ENCODE measurements at regions of chr1 and their contacts with region 1.

Region 1: DNA sequence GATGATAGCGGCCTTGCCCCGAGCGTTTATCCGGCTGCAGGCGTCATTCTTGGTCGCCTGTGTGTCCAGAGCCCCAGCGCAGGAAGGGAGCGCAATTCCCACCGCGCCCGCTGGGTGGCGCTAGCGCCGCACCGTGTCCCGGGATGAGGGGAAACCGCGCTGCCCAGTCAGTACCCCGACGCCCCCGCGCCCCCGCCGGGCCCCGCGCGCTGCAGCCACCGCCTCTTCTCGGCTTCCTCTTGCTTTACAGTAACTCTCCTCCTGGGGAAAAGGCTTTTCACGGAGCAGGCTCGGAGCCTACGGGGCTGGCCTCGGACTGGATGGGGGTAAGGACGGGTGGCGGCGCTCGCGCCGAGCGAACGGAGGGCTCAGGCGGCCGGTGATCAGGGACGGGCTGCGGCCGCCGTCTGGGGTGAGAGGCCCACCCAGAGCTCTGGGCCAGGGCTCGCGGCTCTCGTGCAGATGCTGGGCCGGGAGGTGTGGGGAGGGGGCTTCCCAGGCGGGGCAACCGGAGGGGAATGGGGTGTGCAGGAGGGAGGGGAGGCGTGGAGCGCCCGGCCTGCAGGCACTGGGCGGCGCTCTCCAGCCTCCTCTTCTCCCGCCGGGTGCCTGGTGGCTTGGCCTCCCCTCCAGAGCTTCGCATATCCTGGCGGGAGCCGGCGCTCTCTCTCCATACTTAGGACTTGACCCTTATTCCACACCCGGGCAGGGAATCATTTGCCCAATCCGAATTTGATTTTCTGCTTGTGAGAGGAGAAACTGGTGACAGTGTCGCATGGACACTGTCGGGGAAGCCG is 29.8 kb downstream of the TEX35 start:
- DNase-seq: peak; percentile 93
- ATAC-seq: peak; percentile 88
- H3K4me3 Mint-ChIP-seq: peak overlapping the region; percentile 84
- H3K27ac Mint-ChIP-seq: peak overlapping the region; percentile 85
- H3K4me1 Mint-ChIP-seq: peaks cover 2% of the 10 kb centered on the region
- H3K27me3 Mint-ChIP-seq: no peaks in the 10 kb centered on the region

Region 2: DNA sequence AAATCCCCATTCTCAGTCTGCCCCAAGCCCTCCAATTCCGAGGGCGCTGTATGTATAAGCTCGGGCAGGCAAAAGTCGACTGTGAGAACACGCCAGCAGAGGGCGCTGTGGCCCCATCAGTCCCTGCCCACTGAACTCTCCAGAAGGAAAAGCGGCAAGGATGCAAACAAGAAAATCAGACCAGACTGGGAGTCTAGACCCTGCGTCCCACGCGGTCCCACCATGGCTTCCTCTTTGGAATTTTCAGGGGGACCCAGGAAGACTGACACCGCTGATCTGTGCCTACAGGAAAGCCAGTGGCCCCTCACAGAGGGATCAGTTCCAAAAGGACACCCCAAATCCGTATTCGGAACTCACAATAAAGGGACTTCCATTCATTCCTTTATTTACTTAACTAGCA is 10.4 kb before region 1 on chr1:
- CTCF ChIA-PET with region 1: interaction called, 12 read pairs
- POLR2A ChIA-PET with region 1: no interaction called
- intact Hi-C with region 1: no loop called
- DNase-seq: peak; percentile 86
- ATAC-seq: peak; percentile 84
- H3K4me3 Mint-ChIP-seq: no peak overlapping the region
- H3K27ac Mint-ChIP-seq: no peak overlapping the region
- H3K4me1 Mint-ChIP-seq: no peaks in the 10 kb centered on the region
- H3K27me3 Mint-ChIP-seq: no peaks in the 10 kb centered on the region

Region 3: GRCh38 chr1:178752891-178753290 is 210.1 kb after region 1 on chr1:
- CTCF ChIA-PET with region 1: interaction called, 11 read pairs
- POLR2A ChIA-PET with region 1: no interaction called
- intact Hi-C with region 1: loop called (anchors 1 kb)
- DNase-seq: no peak
- ATAC-seq: no peak
- H3K4me3 Mint-ChIP-seq: no peak overlapping the region
- H3K27ac Mint-ChIP-seq: no peak overlapping the region
- H3K4me1 Mint-ChIP-seq: peaks cover 3% of the 10 kb centered on the region
- H3K27me3 Mint-ChIP-seq: no peaks in the 10 kb centered on the region

Region 4: GRCh38 chr1:178869119-178869697 is 326.4 kb after region 1 on chr1:
- CTCF ChIA-PET with region 1: interaction called, 3 read pairs
- POLR2A ChIA-PET with region 1: no interaction called
- intact Hi-C with region 1: loop called in 1 of 2 experiments (anchors 5 kb)
- DNase-seq: no peak
- ATAC-seq: no peak
- H3K4me3 Mint-ChIP-seq: no peak overlapping the region
- H3K27ac Mint-ChIP-seq: no peak overlapping the region
- H3K4me1 Mint-ChIP-seq: peaks cover 11% of the 10 kb centered on the region
- H3K27me3 Mint-ChIP-seq: no peaks in the 10 kb centered on the region

Region 5: DNA sequence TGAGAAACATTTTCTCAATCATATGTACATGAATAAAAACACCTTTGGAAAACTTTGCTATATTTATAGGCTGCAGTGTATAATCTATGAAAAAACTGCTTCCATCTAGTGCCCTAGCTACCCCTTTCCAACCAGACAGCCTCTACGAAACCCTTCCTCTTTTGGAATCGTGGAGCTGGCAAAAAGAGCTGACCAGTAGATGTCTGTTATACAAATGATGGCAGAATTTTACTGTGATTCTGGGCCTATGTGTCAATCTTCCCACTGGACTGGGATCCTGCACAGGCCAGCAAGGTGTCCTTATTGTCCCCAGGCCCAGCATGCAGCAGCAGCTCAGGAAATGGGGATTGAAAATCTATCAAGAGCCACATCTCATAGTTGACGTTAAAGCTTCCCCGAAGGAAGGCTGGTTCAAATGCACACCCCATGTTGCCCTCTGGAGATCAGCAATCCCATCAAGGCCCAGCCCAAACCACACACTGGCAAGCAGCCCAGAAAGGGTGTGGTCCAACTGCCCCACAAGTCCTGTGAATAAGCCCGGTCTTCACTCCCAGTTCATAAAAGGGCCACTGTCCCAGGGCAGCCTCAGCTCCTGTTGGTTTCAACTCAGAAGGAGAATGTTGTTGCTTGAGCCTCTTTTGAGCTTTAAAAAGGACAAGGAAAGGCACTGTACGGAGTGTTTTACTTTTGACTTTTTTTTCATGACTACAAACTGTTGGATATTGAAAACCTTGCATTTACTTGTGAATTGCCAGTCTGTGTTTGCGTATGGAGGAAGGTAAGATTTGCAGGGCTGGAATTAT is 474.2 kb after region 1 on chr1:
- CTCF ChIA-PET with region 1: no interaction called
- POLR2A ChIA-PET with region 1: no interaction called
- intact Hi-C with region 1: no loop called
- DNase-seq: no peak
- ATAC-seq: no peak
- H3K4me3 Mint-ChIP-seq: no peak overlapping the region
- H3K27ac Mint-ChIP-seq: no peak overlapping the region
- H3K4me1 Mint-ChIP-seq: peaks cover 3% of the 10 kb centered on the region
- H3K27me3 Mint-ChIP-seq: no peaks in the 10 kb centered on the region

Region 6: GRCh38 chr1:179298952-179299351 is 756.2 kb after region 1 on chr1:
- CTCF ChIA-PET with region 1: no interaction called
- POLR2A ChIA-PET with region 1: no interaction called
- intact Hi-C with region 1: loop called in 1 of 2 experiments (anchors 5 kb)
- DNase-seq: peak; percentile 74
- ATAC-seq: peak; percentile 92
- H3K4me3 Mint-ChIP-seq: peak overlapping the region; percentile 22
- H3K27ac Mint-ChIP-seq: peak overlapping the region; percentile 78
- H3K4me1 Mint-ChIP-seq: peaks cover 73% of the 10 kb centered on the region
- H3K27me3 Mint-ChIP-seq: no peaks in the 10 kb centered on the region

Measured in activated CD4-positive, alpha-beta T cell treated with anti-CD3 and anti-CD28 coated beads for 36 hours (primary cell).